ENCODE measurements at regions of chr11 and their contacts with region 1.

Region 1: DNA sequence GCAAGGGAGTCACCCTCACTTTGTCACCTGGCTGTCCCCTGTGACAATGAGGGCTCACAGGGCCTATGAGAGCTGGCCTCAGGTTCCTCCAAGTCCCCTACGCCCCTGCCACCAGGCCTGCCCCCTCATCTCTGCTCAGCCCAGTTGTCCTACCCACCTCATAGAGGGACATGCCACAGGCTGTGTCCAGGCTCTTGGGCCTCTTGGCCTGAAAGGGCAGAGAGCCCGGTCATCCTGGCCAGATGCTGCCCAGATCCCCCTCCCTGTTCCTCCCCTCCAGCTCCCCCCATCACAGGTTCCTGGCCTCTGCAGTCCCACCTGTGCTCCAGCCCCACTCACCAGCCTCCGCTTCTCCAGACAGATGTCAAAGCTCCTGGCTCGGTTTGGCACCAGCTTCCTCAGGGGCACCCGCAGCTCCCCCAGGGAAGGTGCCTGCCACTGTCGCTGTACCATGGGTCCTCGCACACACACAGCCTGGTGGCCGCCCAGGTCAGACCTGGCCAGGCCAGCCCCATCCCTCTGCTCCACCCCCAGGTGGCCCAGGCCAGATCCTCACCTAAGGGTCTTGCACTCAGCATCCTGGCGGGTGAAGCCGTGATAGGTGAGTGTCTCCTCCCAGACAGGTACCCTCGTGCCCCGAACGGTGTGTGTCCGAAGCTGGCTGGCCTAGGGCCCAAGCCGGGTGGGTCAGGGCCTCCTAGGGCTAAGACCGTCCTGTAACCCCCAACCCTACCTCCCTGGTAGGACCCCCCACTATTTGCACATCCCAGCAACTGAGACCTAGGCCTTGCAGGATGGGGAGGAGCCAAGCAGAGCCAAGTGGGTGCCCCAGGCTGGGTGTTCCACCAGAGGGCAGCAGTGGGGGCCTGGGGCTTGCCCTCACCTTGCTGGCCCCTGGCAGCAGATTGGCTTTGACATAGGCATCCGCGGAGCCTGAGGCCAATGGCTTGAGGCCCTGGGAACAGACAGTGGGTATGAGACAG is 8.3 kb downstream of the NDUFV1 start:
- DNase-seq: peak; percentile 47 to 74
- ATAC-seq: peak; percentile 70 to 83 (median 77)
- H3K4me3 ChIP-seq: no peak overlapping the region
- H3K27ac ChIP-seq: no peak overlapping the region
- H3K4me1 ChIP-seq: peaks cover 4% of the 10 kb centered on the region
- H3K27me3 ChIP-seq: peaks cover 0 to 8% (median 0%) of the 10 kb centered on the region in 3 donors
- CTCF ChIP-seq: peak; percentile 58

Region 2: GRCh38 chr11:67656278-67656922 is 41.4 kb after region 1 on chr11:
- intact Hi-C with region 1: loop called in 1 of 2 experiments (anchors 5 kb)
- DNase-seq: no peak
- ATAC-seq: no peak
- H3K4me3 ChIP-seq: no peak overlapping the region
- H3K27ac ChIP-seq: no peak overlapping the region
- H3K4me1 ChIP-seq: no peaks in the 10 kb centered on the region
- H3K27me3 ChIP-seq: no peaks in the 10 kb centered on the region
- CTCF ChIP-seq: no peak